ENCODE measurements at regions of chr1 and their contacts with region 1.

Region 1: GRCh38 chr1:25037174-25038074 is 107.3 kb upstream of the RUNX3 start:
- DNase-seq: peak; percentile 52
- H3K4me3 ChIP-seq: no peak overlapping the region
- H3K27ac ChIP-seq: no peak overlapping the region
- H3K4me1 ChIP-seq: no peaks in the 10 kb centered on the region
- H3K27me3 ChIP-seq: no peaks in the 10 kb centered on the region
- CTCF ChIP-seq: peak; percentile 62

Region 2: GRCh38 chr1:25103164-25103795 is 65.9 kb after region 1 on chr1:
- intact Hi-C with region 1: loop called (anchors 5 kb)
- DNase-seq: no peak
- H3K4me3 ChIP-seq: no peak overlapping the region
- H3K27ac ChIP-seq: no peak overlapping the region
- H3K4me1 ChIP-seq: no peaks in the 10 kb centered on the region
- H3K27me3 ChIP-seq: no peaks in the 10 kb centered on the region
- CTCF ChIP-seq: no peak

Region 3: GRCh38 chr1:25194572-25195020 is 157.2 kb after region 1 on chr1:
- intact Hi-C with region 1: no loop called
- DNase-seq: no peak
- H3K4me3 ChIP-seq: no peak overlapping the region
- H3K27ac ChIP-seq: no peak overlapping the region
- H3K4me1 ChIP-seq: peaks cover 8% of the 10 kb centered on the region
- H3K27me3 ChIP-seq: no peaks in the 10 kb centered on the region
- CTCF ChIP-seq: no peak

Measured in colonic mucosa (tissue), 4 donors.